ENCODE measurements at regions of chr14 and their contacts with region 1.

Region 1: GRCh38 chr14:68377459-68377858 is 415.4 kb downstream of the ZFP36L1 start:
- DNase-seq: no peak
- ATAC-seq: peak; percentile 28
- H3K4me3 ChIP-seq: no peak overlapping the region
- H3K27ac ChIP-seq: peak overlapping the region; percentile 83
- H3K4me1 ChIP-seq: peaks cover 67% of the 10 kb centered on the region
- H3K27me3 ChIP-seq: no peaks in the 10 kb centered on the region
- CTCF ChIP-seq: no peak
- EP300 ChIP-seq: no peak
- POLR2A ChIP-seq: no peak
- RAD21 ChIP-seq: no peak

Region 2: DNA sequence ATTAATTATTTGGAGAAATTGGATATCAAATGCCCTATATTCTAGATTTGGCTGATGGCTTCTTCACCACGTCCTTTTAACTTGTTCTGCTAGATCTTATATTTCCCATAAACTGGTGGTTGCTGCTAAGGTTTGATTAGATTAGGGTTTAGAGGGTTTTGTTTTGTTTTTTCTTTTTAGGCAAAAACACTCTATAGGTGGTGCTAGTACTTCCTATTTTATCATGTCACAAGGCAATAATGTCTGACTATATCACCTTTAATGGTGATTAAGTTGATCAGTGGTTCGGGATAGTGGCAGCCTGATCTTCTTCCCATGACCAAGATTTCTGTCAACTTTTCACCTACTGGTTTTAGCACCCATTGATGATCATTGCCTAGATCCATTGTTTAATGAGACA is 102.7 kb before region 1 on chr14:
- CTCF ChIA-PET with region 1: interaction called, 4 read pairs
- POLR2A ChIA-PET with region 1: interaction called, 72 read pairs
- RAD21 ChIA-PET with region 1: interaction called, 26 read pairs
- SMC1A ChIA-PET with region 1: interaction called, 51 read pairs
- in situ Hi-C with region 1: no loop called
- intact Hi-C with region 1: no loop called
- DNase-seq: no peak
- ATAC-seq: no peak
- H3K4me3 ChIP-seq: no peak overlapping the region
- H3K27ac ChIP-seq: peak overlapping the region; percentile 91
- H3K4me1 ChIP-seq: peaks cover 78% of the 10 kb centered on the region
- H3K27me3 ChIP-seq: no peaks in the 10 kb centered on the region
- CTCF ChIP-seq: peak in 1 of 3 experiments; percentile 22; a peak in 1 of 6 replicates
- EP300 ChIP-seq: no peak
- POLR2A ChIP-seq: no peak
- RAD21 ChIP-seq: 0 out of 2 replicates have a peak, but pooled peaks have one; percentile 21

Region 3: DNA sequence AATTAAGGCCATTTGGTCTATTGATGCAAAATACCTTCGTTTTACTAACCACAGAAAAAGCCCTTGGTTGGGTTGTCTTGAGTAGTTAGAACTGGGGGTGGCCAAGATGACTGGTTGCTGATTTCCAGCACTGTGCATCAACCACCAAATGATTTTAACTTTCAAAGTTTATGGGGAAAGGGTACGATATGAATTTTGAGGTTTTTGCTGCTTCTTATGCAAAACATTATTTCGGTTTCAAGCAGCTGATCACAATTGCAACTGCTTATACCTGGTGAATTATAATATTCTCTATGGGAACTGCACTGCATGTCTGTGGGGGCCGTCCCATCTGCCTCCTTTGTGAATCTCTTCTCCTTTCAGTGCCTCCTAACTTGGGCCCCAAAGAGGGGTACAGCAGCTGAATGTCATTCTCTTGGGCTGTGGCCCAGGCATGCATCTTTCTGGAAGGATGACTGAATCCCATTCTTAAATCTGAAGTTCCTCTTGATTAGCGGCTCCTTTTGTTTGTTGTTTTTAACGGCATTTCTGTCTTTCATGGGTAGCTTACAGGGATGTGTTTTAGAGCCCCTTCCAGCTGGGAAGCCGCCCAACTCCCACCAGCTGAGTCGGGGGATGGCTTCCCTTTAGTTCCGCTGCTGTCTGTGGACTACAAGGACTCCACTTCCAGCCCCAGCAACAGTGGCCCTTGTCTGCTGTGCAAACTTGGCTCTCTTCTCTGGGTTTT is 64.4 kb before region 1 on chr14:
- CTCF ChIA-PET with region 1: interaction called, 17 read pairs
- POLR2A ChIA-PET with region 1: interaction called, 8 read pairs
- RAD21 ChIA-PET with region 1: interaction called, 40 read pairs
- SMC1A ChIA-PET with region 1: interaction called, 151 read pairs
- in situ Hi-C with region 1: no loop called
- intact Hi-C with region 1: loop called (anchors 2 kb)
- DNase-seq: peak; percentile 99
- ATAC-seq: peak; percentile 89
- H3K4me3 ChIP-seq: no peak overlapping the region; the same call in 1 of the 2 replicates
- H3K27ac ChIP-seq: peak overlapping the region; percentile 91
- H3K4me1 ChIP-seq: peaks cover 64% of the 10 kb centered on the region
- H3K27me3 ChIP-seq: no peaks in the 10 kb centered on the region
- CTCF ChIP-seq: no peak
- EP300 ChIP-seq: peak; percentile 88 to 97; a peak in 3 of 4 replicates
- POLR2A ChIP-seq: peak; percentile 49; the same call in 1 of the 2 replicates
- RAD21 ChIP-seq: peak; percentile 41

Region 4: DNA sequence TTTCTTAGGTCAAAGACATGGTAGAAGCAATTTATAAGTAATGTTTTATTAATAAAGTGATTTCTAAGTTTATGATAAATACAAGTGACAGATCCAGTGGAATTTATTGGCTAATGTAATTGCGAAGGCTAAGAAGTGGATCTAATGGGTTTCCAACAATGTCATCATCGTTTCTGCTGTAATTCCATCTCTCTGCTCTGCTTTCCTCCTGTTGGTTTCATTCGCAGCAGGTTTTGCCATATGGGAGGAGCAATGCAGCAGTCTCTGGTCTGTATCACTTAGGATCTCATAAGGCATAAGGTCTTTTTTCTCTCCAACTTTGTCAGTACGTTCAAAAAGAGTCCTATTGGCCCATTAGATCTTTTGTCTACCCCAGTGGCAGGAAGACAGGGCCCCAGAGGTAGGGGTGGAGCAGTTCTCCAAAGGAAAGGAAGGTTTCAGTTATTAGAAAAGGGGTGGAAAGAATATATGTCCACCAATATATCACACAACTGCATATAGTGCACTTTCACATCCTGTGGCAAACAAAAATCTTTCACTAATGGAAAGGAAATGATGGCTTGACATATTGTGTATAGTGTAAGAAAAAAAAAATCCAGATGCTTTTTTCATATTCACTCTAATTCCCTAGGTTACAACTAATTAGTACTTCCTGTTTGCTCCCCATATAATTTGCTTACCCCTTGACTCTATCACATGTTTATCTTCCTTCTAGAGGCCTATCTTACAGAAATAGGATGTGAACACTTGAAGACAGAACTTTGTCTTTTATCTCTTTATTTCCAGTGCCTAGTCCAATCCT is 35.8 kb before region 1 on chr14:
- CTCF ChIA-PET with region 1: interaction called, 4 read pairs
- POLR2A ChIA-PET with region 1: interaction called, 3 read pairs
- RAD21 ChIA-PET with region 1: interaction called, 6 read pairs
- SMC1A ChIA-PET with region 1: interaction called, 15 read pairs
- in situ Hi-C with region 1: no loop called
- intact Hi-C with region 1: no loop called
- DNase-seq: peak; percentile 71
- ATAC-seq: peak; percentile 87
- H3K4me3 ChIP-seq: no peak overlapping the region
- H3K27ac ChIP-seq: peak overlapping the region; percentile 75
- H3K4me1 ChIP-seq: peaks cover 44% of the 10 kb centered on the region
- H3K27me3 ChIP-seq: no peaks in the 10 kb centered on the region
- CTCF ChIP-seq: no peak
- EP300 ChIP-seq: peak; percentile 61 to 76; a peak in 2 of 4 replicates
- POLR2A ChIP-seq: no peak
- RAD21 ChIP-seq: no peak

Region 5: GRCh38 chr14:68466491-68467032 is 89.1 kb after region 1 on chr14:
- CTCF ChIA-PET with region 1: interaction called, 4 read pairs
- POLR2A ChIA-PET with region 1: no interaction called
- RAD21 ChIA-PET with region 1: interaction called, 8 read pairs
- SMC1A ChIA-PET with region 1: interaction called, 12 read pairs
- in situ Hi-C with region 1: no loop called
- intact Hi-C with region 1: no loop called
- DNase-seq: no peak
- ATAC-seq: no peak
- H3K4me3 ChIP-seq: no peak overlapping the region
- H3K27ac ChIP-seq: no peak overlapping the region
- H3K4me1 ChIP-seq: peaks cover 16% of the 10 kb centered on the region
- H3K27me3 ChIP-seq: no peaks in the 10 kb centered on the region
- CTCF ChIP-seq: no peak
- EP300 ChIP-seq: no peak
- POLR2A ChIP-seq: no peak
- RAD21 ChIP-seq: no peak

Region 6: GRCh38 chr14:68788996-68789820 is 411.7 kb after region 1 on chr14:
- CTCF ChIA-PET with region 1: interaction called, 15 read pairs
- POLR2A ChIA-PET with region 1: interaction called, 6 read pairs
- RAD21 ChIA-PET with region 1: interaction called, 22 read pairs
- SMC1A ChIA-PET with region 1: interaction called, 24 read pairs
- in situ Hi-C with region 1: no loop called
- intact Hi-C with region 1: loop called (anchors 1 kb)
- DNase-seq: no peak
- ATAC-seq: peak; percentile 39
- H3K4me3 ChIP-seq: peak overlapping the region; percentile 97
- H3K27ac ChIP-seq: peak overlapping the region; percentile 100
- H3K4me1 ChIP-seq: peaks cover 32% of the 10 kb centered on the region
- H3K27me3 ChIP-seq: no peaks in the 10 kb centered on the region
- CTCF ChIP-seq: peak; percentile 76 to 93 (median 85); a peak in 5 of 6 replicates
- EP300 ChIP-seq: no peak
- POLR2A ChIP-seq: peak; percentile 77
- RAD21 ChIP-seq: peak; percentile 80